HEK293 (cell line): ENCODE measurements at regions of chr17 and their contacts with region 1.

Region 1: GRCh38 chr17:3827124-3827773 is 18.8 kb downstream of the NCBP3 start:
- H3K4me3 ChIP-seq: no peak overlapping the region
- H3K27ac ChIP-seq: no peak overlapping the region
- H3K4me1 ChIP-seq: no peaks in the 10 kb centered on the region
- CTCF ChIP-seq: no peak

Region 2: DNA sequence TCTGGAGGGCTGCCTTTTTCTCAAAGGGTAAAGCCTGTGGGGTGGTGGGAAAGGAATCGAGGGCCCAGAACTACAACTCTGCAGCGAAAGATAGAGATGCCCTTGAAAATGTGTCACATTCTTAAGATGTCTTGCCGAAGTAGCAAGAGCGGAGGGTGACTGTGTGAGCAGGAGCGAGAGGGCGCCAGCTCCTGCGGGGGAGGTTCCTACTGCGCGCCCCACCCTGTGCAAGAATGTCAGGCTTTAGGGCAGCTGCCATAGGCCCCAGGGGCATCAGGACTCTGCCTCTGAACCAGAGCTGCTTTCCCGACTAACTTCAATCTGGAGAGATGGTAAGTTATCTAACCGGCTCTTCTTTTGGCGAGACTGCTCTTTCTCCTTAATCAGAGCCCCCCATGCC is 14.5 kb before region 1 on chr17:
- CTCF ChIA-PET with region 1: interaction called, 37 read pairs
- POLR2A ChIA-PET with region 1: no interaction called
- H3K4me3 ChIP-seq: no peak overlapping the region
- H3K27ac ChIP-seq: no peak overlapping the region
- H3K4me1 ChIP-seq: no peaks in the 10 kb centered on the region
- CTCF ChIP-seq: no peak